ENCODE measurements at regions of chr12 and their contacts with region 1.

Region 1: GRCh38 chr12:47307680-47308399 is 228.1 kb upstream of the AMIGO2 start:
- DNase-seq: peak; percentile 64 to 72 (median 66)
- H3K4me3 ChIP-seq: peak overlapping the region; percentile 78 to 82
- H3K4me3 Mint-ChIP-seq: peak overlapping the region; percentile 89 to 99 (median 94)
- H3K27ac ChIP-seq: peak overlapping the region; percentile 51
- H3K27ac Mint-ChIP-seq: peak overlapping the region; percentile 82 to 95 (median 93)
- H3K4me1 ChIP-seq: peaks cover 13% of the 10 kb centered on the region
- H3K4me1 Mint-ChIP-seq: peaks cover 21 to 43% (median 32%) of the 10 kb centered on the region in 4 donors
- H3K27me3 ChIP-seq: no peaks in the 10 kb centered on the region
- H3K27me3 Mint-ChIP-seq: no peaks in the 10 kb centered on the region

Region 2: GRCh38 chr12:46585854-46586621 is 721.8 kb before region 1 on chr12:
- CTCF ChIA-PET with region 1: no interaction called
- POLR2A ChIA-PET with region 1: no interaction called
- intact Hi-C with region 1: no loop called
- DNase-seq: peak; percentile 54 to 71 (median 62)
- H3K4me3 ChIP-seq: peak overlapping the region in 1 of 2 donors; percentile 16
- H3K4me3 Mint-ChIP-seq: peak overlapping the region; percentile 53 to 78 (median 71)
- H3K27ac ChIP-seq: no peak overlapping the region
- H3K27ac Mint-ChIP-seq: peak overlapping the region; percentile 65 to 93 (median 83)
- H3K4me1 ChIP-seq: peaks cover 21% of the 10 kb centered on the region
- H3K4me1 Mint-ChIP-seq: peaks cover 51 to 73% (median 63%) of the 10 kb centered on the region in 4 donors
- H3K27me3 ChIP-seq: no peaks in the 10 kb centered on the region
- H3K27me3 Mint-ChIP-seq: no peaks in the 10 kb centered on the region

Region 3: DNA sequence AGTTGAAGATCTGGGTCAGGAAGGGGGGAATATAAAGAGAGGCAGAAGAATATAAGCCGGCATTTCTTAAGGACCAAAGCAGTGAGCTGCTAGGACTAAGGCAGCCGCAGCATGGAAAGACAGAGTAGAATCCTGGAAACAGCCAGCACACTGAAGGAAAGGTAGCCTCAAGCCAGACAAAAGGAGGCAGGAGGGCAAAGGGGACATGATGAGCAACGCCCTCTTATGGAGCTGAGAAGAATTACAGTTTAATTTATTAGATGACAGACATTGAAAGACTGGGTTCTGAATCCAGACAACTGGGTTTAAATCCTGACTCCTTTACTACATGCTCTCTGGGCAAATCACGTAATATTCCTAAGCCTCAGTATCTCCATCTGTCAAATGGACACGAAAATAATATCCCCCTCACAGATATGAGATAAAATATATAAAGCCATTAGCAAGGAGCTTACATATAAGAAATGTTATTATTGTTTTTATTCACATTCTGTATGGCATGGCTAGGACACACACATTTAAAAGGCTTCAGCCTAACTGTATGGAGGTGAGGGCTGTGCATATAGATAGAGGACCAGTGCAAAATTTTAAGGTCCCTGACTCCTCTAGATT is 236.5 kb before region 1 on chr12:
- CTCF ChIA-PET with region 1: interaction called, 27 read pairs
- POLR2A ChIA-PET with region 1: interaction called, 4 read pairs
- intact Hi-C with region 1: loop called (anchors 2 kb)
- DNase-seq: peak in 4 of 5 donors; percentile 15 to 32 (median 26)
- H3K4me3 ChIP-seq: no peak overlapping the region
- H3K4me3 Mint-ChIP-seq: no peak overlapping the region
- H3K27ac ChIP-seq: no peak overlapping the region
- H3K27ac Mint-ChIP-seq: no peak overlapping the region
- H3K4me1 ChIP-seq: no peaks in the 10 kb centered on the region
- H3K4me1 Mint-ChIP-seq: peaks cover 0 to 7% (median 3%) of the 10 kb centered on the region in 4 donors
- H3K27me3 ChIP-seq: no peaks in the 10 kb centered on the region
- H3K27me3 Mint-ChIP-seq: no peaks in the 10 kb centered on the region

Region 4: DNA sequence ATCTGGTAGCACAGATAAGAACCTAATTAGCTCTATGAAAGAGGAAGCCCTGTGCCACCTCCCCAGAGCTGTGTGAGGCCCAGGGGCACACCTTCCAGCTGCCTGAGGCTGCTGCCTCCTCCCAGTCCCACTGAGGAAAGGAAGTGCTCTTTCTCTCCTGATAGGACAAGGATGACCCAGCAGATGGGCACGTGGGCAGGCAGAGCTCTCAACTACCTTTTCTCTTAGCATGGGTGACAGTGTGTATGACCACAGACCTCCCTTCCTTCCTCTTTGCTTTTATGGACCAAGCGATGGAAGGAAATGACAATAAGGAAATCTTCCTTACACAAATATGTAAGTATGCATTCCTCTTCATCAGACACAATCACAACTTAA is 100.5 kb before region 1 on chr12:
- CTCF ChIA-PET with region 1: interaction called, 24 read pairs
- POLR2A ChIA-PET with region 1: interaction called, 29 read pairs
- intact Hi-C with region 1: no loop called
- DNase-seq: peak; percentile 38 to 76 (median 44)
- H3K4me3 ChIP-seq: peak overlapping the region; percentile 24 to 64
- H3K4me3 Mint-ChIP-seq: peak overlapping the region; percentile 68 to 97 (median 82)
- H3K27ac ChIP-seq: peak overlapping the region; percentile 60
- H3K27ac Mint-ChIP-seq: peak overlapping the region; percentile 87 to 96 (median 94)
- H3K4me1 ChIP-seq: peaks cover 77% of the 10 kb centered on the region
- H3K4me1 Mint-ChIP-seq: peaks cover 64 to 88% (median 76%) of the 10 kb centered on the region in 4 donors
- H3K27me3 ChIP-seq: no peaks in the 10 kb centered on the region
- H3K27me3 Mint-ChIP-seq: no peaks in the 10 kb centered on the region

Region 5: DNA sequence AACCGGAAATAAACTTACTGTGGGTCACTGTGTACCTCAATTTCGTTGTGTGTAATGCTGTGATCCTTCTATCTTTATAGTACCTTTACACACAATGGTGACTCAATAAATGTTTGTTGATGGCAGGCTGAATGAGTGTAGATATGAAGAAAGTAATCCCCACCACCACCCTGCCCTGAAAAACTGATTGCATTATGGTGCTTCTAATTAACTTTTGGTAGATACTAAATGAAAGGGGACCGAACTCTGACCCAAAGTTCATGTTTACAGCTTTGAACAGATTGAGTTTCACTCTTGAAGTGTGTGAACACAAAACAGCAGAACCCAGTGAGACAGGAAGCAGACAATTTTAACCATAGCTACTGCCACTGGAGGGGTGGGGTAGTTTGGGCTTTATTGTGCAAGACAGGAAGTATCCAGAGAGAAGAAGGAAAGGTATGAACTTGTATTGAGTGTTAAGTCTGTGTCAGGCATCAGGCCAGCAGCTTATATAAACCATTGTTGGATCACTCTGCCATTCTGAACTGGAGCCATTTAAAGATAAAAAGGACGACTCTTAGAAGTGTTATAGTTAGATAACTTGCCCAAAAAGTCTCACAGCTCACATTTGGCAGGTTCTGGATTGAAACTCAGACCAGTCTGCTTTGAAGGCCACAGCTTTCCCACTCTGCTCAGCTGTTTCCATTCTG is 31.1 kb before region 1 on chr12:
- CTCF ChIA-PET with region 1: interaction called, 19 read pairs
- POLR2A ChIA-PET with region 1: interaction called, 55 read pairs
- intact Hi-C with region 1: loop called (anchors 1 kb)
- DNase-seq: peak; percentile 75 to 85 (median 81)
- H3K4me3 ChIP-seq: peak overlapping the region in 1 of 2 donors; percentile 19
- H3K4me3 Mint-ChIP-seq: peak overlapping the region; percentile 51 to 87 (median 74)
- H3K27ac ChIP-seq: peak overlapping the region; percentile 55
- H3K27ac Mint-ChIP-seq: peak overlapping the region; percentile 85 to 98 (median 92)
- H3K4me1 ChIP-seq: peaks cover 44% of the 10 kb centered on the region
- H3K4me1 Mint-ChIP-seq: peaks cover 32 to 59% (median 53%) of the 10 kb centered on the region in 4 donors
- H3K27me3 ChIP-seq: no peaks in the 10 kb centered on the region
- H3K27me3 Mint-ChIP-seq: no peaks in the 10 kb centered on the region

Region 6: DNA sequence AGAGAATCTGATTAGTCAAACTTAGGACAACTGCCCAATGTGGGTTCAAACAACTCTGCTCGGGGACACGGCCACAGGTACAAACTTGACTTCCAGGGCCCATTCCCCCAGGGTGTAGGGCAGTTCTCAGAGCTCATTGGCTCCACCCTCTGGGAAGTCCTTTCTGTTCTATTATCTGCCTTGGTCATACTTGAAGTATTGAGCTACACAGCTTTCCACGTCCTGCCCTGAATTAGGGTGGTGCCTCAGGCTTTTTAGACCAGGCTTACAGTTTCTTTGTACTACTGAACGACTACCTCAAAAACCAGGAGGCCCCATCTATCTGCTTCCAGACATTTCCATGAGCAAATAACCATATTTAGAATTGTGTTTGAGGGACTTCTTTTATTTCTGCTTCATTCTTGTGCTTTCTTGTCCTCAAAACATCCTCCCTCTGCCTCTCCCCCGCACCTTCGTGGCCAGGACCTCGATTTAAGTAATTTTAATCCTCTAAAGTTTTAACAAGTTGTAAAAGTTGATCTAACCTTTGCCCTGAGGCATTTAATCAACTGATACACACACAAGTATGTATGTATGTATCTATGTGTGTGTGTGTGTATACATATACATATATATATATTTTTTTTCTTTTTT is 53.7 kb after region 1 on chr12:
- CTCF ChIA-PET with region 1: interaction called, 10 read pairs
- POLR2A ChIA-PET with region 1: interaction called, 13 read pairs
- intact Hi-C with region 1: loop called (anchors 2 kb)
- DNase-seq: peak; percentile 23 to 64 (median 29)
- H3K4me3 ChIP-seq: peak overlapping the region; percentile 37 to 41
- H3K4me3 Mint-ChIP-seq: peak overlapping the region; percentile 73 to 93 (median 86)
- H3K27ac ChIP-seq: peak overlapping the region; percentile 90
- H3K27ac Mint-ChIP-seq: peak overlapping the region; percentile 94 to 99 (median 96)
- H3K4me1 ChIP-seq: peaks cover 81% of the 10 kb centered on the region
- H3K4me1 Mint-ChIP-seq: peaks cover 48 to 63% (median 55%) of the 10 kb centered on the region in 4 donors
- H3K27me3 ChIP-seq: no peaks in the 10 kb centered on the region
- H3K27me3 Mint-ChIP-seq: no peaks in the 10 kb centered on the region

Measured in CD4-positive, alpha-beta memory T cell (primary cell).